IMR-90 (cell line): ENCODE measurements at regions of chr7 and their contacts with region 1.

Region 1: GRCh38 chr7:68684246-68684839 is 913.9 kb upstream of the AUTS2 start:
- DNase-seq: peak; percentile 17
- ATAC-seq: no peak
- H3K4me3 ChIP-seq: no peak overlapping the region
- H3K27ac ChIP-seq: no peak overlapping the region
- H3K4me1 ChIP-seq: no peaks in the 10 kb centered on the region
- H3K27me3 ChIP-seq: no peaks in the 10 kb centered on the region
- CTCF ChIP-seq: no peak
- POLR2A ChIP-seq: no peak
- RAD21 ChIP-seq: no peak

Region 2: GRCh38 chr7:68720697-68721096 is 36.4 kb after region 1 on chr7:
- CTCF ChIA-PET with region 1: no interaction called
- POLR2A ChIA-PET with region 1: interaction called, 21 read pairs
- dilution Hi-C with region 1: no loop called
- in situ Hi-C with region 1: no loop called
- intact Hi-C with region 1: no loop called
- DNase-seq: peak; percentile 22
- ATAC-seq: no peak
- H3K4me3 ChIP-seq: no peak overlapping the region
- H3K27ac ChIP-seq: no peak overlapping the region
- H3K4me1 ChIP-seq: no peaks in the 10 kb centered on the region
- H3K27me3 ChIP-seq: no peaks in the 10 kb centered on the region
- CTCF ChIP-seq: no peak
- POLR2A ChIP-seq: no peak
- RAD21 ChIP-seq: no peak